ENCODE measurements at regions of chr4 and their contacts with region 1.

Region 1: DNA sequence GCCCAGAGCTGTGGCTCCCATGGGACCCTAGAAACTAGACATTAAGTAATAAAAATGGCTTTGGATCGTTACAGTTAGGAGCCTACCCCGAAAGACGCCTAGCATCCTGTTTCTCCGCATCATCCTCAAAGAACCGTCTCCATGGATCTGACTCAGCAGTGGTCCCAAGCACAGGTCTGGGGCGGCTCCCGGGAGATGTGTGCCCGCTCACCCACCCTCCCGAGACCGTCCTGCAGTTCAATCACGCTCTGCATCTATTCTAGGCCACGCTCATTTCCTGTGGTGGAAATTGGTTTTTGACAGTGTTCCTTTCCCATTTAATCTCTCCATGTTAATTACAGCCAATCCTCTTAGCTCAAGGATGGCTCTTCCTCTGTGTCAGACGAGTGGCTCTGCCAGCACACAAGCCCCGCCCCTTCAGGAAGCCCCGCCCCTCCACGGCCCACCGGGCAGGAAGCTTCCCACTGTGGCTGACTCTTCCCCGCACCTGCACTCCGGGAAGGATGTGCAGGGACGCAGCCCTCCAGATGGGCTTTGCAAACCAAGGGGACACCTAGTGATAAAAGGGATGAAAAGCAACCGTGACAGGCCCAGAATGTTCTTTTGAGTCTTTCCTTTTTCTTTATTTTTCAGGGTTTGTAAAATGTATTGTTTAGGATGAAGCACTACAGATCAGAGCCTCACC is 34.5 kb upstream of the HELT start:
- H3K4me3 Mint-ChIP-seq: no peak overlapping the region
- H3K27ac Mint-ChIP-seq: no peak overlapping the region
- H3K4me1 Mint-ChIP-seq: peaks cover 9% of the 10 kb centered on the region
- H3K27me3 Mint-ChIP-seq: peaks cover 7% of the 10 kb centered on the region

Region 2: DNA sequence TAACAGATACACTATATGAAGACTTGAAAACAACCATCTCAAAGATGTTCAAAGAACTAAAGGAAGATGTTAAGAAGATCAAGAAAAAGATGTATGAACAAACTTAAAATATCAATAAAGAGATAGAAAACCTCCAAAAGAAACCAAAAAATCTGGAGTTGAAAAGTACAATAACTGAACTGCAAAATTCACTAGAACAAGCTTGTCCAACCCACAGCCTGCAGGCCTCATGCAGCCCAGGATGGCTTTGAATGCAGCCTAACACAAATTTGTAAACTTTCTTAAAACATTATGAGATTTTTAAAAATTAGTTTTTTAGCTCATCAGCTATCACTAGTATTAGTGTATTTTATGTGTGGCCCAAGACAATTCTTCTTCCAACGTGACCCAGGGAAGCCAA is 1989.6 kb before region 1 on chr4:
- intact Hi-C with region 1: no loop called
- H3K4me3 Mint-ChIP-seq: no peak overlapping the region
- H3K27ac Mint-ChIP-seq: no peak overlapping the region
- H3K4me1 Mint-ChIP-seq: no peaks in the 10 kb centered on the region
- H3K27me3 Mint-ChIP-seq: no peaks in the 10 kb centered on the region

Region 3: DNA sequence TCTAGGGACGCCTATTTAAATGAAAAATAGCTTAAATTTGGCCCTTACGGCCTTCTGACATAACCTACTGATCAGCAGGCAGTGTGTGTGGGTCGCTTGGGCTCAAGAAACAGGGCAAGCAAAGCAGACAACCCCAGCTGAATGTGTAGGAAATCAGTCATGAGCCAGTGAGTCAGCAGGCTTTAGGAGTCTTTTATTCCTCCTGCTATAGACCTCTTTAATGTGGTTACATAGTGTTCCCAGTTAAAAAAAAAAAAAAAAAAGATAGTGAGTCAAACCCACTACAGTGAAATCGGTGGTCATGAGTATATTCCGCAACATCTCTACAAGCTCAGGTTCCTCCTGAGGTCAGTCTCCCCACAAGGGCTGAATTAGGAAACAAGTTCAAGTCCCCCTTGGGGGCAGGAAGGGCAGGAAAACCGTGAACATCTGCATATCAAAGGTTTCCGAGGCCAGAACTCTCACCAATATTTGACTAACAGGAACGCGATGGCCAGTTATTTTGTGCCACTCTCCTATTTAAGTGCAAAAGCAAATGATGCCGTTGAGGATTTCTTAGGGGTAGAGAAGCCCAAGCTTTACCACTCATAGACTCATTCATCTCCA is 190.8 kb before region 1 on chr4:
- intact Hi-C with region 1: loop called (anchors 10 kb)
- H3K4me3 Mint-ChIP-seq: no peak overlapping the region
- H3K27ac Mint-ChIP-seq: no peak overlapping the region
- H3K4me1 Mint-ChIP-seq: peaks cover 43% of the 10 kb centered on the region
- H3K27me3 Mint-ChIP-seq: no peaks in the 10 kb centered on the region